MCF 10A (cell line): ENCODE measurements at regions of chr12 and their contacts with region 1.

Region 1: GRCh38 chr12:122123051-122123760 is 44.6 kb downstream of the MLXIP start:
- DNase-seq: peak; percentile 84
- H3K4me3 Mint-ChIP-seq: peak overlapping the region; percentile 1
- H3K27ac Mint-ChIP-seq: no peak overlapping the region
- H3K4me1 Mint-ChIP-seq: peaks cover 19% of the 10 kb centered on the region
- H3K27me3 Mint-ChIP-seq: no peaks in the 10 kb centered on the region
- CTCF ChIP-seq: peak; percentile 82

Region 2: DNA sequence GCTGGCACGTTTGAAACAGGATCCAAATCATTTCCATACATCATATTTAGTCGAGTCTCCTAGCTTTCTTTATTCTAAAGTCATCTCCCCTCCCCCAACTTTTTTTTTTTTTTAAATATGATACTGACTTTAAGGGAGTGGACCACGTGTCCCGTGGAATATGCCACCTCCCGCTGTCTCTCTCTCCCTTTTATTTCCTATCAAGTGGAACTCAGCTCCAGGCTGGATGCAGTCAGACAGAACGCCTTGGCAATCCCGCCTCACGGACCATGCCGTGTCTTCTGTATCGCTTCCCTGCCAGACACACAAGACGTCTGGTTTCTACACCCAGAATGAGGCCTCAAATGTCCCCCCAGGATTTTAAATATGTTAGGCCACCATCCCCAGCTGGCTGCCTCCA is 80.3 kb before region 1 on chr12:
- CTCF ChIA-PET with region 1: interaction called, 40 read pairs
- POLR2A ChIA-PET with region 1: no interaction called
- intact Hi-C with region 1: no loop called
- DNase-seq: no peak
- H3K4me3 Mint-ChIP-seq: no peak overlapping the region
- H3K27ac Mint-ChIP-seq: no peak overlapping the region
- H3K4me1 Mint-ChIP-seq: peaks cover 4% of the 10 kb centered on the region
- H3K27me3 Mint-ChIP-seq: no peaks in the 10 kb centered on the region
- CTCF ChIP-seq: no peak

Region 3: DNA sequence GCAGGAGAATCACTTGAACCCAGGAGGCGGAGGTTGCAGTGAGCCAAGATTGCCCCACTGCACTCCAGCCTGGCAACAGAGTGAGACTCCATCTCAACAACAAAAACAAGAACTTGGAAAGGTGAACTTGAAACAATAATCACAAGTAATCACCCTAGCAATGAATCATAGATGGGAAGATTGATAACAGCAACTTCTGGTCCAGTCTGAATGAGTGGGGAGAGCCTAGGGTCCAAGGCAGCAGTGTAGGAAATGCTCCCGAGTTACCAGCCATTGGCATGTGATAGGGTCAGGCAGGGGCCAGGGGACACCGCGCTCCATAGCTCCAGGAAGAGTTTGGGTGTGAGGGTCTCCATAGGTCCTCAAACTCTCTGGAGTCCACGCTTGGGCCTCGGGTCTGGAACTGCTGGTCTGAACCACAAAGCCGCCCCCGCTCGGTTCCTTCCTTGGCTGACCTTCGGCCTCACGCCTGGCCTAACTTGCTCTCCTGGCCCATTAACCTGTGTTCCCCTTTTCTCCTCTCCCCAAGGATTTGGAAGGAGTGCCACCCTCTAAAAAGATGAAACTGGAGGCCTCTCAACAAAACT is 64.5 kb before region 1 on chr12:
- CTCF ChIA-PET with region 1: interaction called, 68 read pairs
- POLR2A ChIA-PET with region 1: interaction called, 6 read pairs
- intact Hi-C with region 1: loop called (anchors 1 kb)
- DNase-seq: no peak
- H3K4me3 Mint-ChIP-seq: no peak overlapping the region
- H3K27ac Mint-ChIP-seq: no peak overlapping the region
- H3K4me1 Mint-ChIP-seq: peaks cover 11% of the 10 kb centered on the region
- H3K27me3 Mint-ChIP-seq: no peaks in the 10 kb centered on the region
- CTCF ChIP-seq: no peak

Region 4: DNA sequence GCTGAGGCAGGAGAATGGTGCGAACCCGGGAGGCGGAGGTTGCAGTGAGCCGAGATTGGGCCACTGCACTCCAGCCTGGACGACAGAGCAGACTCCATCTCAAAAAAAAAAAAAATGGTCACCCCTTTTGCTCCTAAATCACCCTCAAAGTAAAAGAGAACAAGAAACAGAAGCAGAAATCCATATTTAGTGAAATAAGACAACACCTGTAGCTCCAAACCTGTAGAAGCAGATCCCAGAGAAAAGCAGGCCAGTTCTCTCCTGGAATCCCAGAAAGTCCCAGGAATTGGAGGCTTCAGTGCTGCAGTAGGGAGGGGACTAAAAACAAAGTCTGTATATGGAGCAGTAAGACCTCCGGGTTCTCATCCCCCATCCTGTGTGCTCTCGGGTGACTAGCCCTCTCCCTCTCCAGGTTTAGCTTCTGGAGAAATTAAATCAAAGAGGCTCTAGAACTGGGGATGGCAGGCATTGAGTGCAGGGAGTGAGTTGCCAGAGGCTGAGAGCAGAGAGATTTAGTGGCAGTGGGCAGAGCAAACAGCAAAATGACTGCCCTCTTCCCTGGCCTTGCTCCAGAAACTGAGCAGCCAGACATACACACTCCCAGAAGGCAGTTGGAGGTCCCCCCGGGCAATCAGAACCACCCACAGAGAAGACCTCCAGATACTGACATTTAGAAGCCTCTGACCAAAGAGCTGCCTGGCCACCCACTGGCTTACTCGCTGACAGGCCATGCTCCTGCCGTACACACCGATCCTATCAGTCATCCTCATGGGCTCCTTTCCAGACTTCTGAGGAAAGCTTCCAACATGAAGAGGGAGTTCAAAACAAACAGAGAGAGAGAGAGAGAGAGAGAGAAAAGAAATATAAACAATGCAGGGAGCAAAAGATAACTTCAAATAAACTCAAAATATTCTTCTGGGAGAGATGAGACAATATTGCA is 50.9 kb before region 1 on chr12:
- CTCF ChIA-PET with region 1: interaction called, 16 read pairs
- POLR2A ChIA-PET with region 1: interaction called, 3 read pairs
- intact Hi-C with region 1: no loop called
- DNase-seq: peak; percentile 94
- H3K4me3 Mint-ChIP-seq: no peak overlapping the region
- H3K27ac Mint-ChIP-seq: peak overlapping the region; percentile 20
- H3K4me1 Mint-ChIP-seq: peaks cover 7% of the 10 kb centered on the region
- H3K27me3 Mint-ChIP-seq: no peaks in the 10 kb centered on the region
- CTCF ChIP-seq: no peak